ENCODE measurements at regions of chr1 and their contacts with region 1.

Region 1: GRCh38 chr1:229059671-229060539 is 211.0 kb upstream of the RAB4A start:
- DNase-seq: no peak
- H3K4me3 ChIP-seq: no peak overlapping the region
- H3K27ac ChIP-seq: no peak overlapping the region
- H3K4me1 ChIP-seq: no peaks in the 10 kb centered on the region
- H3K27me3 ChIP-seq: peaks cover 77% of the 10 kb centered on the region
- CTCF ChIP-seq: no peak

Region 2: DNA sequence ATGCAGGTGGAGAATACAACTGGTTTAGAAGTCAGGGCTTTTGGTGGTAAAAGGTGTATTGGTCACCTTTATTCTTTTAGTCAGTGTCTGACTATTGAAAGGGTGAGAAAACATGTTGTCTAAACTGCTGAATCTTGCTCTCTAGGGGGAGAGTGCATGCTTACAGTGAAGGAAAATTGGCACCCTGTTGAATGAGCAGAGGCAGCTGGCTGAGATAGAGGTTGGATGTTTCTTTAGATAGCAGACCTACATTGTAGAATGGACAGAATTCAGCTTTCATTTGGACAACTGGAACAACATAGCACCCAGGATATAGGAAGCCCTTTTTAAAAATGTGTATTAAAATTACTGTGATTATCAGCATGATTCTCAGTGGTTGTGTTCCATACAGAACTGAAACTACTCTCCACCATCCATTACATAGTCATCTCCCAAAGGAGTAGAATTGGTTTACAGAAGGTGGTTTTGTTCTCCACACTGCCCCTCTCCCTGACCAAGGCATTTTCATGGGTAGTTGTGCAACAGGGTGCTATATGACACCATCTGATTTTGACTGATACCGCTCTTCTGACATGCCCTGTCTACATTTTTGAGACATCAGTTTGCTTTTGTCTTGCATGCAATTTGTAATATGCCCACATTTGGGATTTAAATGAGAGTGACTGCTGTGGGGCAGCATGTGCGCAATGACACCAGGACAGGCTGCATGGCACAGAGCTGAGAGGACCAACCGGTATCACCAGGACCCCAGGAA is 308.4 kb before region 1 on chr1:
- CTCF ChIA-PET with region 1: no interaction called
- POLR2A ChIA-PET with region 1: no interaction called
- intact Hi-C with region 1: no loop called
- DNase-seq: no peak
- H3K4me3 ChIP-seq: no peak overlapping the region
- H3K27ac ChIP-seq: no peak overlapping the region
- H3K4me1 ChIP-seq: no peaks in the 10 kb centered on the region
- H3K27me3 ChIP-seq: peaks cover 66% of the 10 kb centered on the region
- CTCF ChIP-seq: no peak

Region 3: DNA sequence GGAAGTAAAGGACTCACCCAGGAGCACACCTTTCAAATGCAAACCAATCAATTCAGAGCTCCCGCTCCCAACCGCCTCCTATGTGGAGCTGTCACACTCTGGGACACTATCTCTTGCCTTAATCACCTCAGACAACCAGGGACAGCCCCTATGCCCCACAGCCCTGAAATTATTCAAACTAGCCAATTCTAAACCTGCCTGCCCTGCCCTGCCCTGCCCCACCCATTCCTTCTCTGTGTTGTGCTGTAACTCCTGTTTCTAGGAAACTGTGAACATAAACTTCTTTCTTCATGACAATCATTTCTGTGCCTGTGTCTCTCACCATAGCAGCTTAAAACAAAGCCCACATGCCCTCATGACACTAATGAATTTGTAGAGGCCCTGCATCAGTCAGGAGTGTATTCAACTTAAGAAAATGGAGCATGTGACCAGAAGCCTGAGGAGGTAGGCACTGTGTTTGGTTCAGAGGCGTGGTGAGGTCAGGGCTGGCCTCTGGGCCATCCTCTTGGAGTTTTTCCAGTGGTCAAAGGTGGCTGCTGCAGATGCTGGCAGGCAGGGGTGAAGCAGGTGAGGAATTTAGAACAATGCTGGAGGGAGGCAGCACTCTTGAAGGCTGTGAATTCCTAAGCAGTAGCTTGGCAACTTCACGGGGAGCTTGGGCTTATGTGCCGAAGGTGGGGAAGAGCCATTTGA is 250.1 kb before region 1 on chr1:
- CTCF ChIA-PET with region 1: interaction called, 14 read pairs
- POLR2A ChIA-PET with region 1: no interaction called
- intact Hi-C with region 1: no loop called
- DNase-seq: peak in 1 of 2 experiments; percentile 43
- H3K4me3 ChIP-seq: no peak overlapping the region
- H3K27ac ChIP-seq: no peak overlapping the region
- H3K4me1 ChIP-seq: no peaks in the 10 kb centered on the region
- H3K27me3 ChIP-seq: peaks cover 52% of the 10 kb centered on the region
- CTCF ChIP-seq: no peak

Region 4: GRCh38 chr1:229075217-229075616 is 15.3 kb after region 1 on chr1:
- CTCF ChIA-PET with region 1: no interaction called
- POLR2A ChIA-PET with region 1: no interaction called
- intact Hi-C with region 1: no loop called
- DNase-seq: no peak
- H3K4me3 ChIP-seq: no peak overlapping the region
- H3K27ac ChIP-seq: no peak overlapping the region
- H3K4me1 ChIP-seq: no peaks in the 10 kb centered on the region
- H3K27me3 ChIP-seq: peaks cover 68% of the 10 kb centered on the region
- CTCF ChIP-seq: no peak

Region 5: GRCh38 chr1:229127301-229127700 is 67.4 kb after region 1 on chr1:
- CTCF ChIA-PET with region 1: no interaction called
- POLR2A ChIA-PET with region 1: no interaction called
- intact Hi-C with region 1: no loop called
- DNase-seq: no peak
- H3K4me3 ChIP-seq: no peak overlapping the region
- H3K27ac ChIP-seq: no peak overlapping the region
- H3K4me1 ChIP-seq: no peaks in the 10 kb centered on the region
- H3K27me3 ChIP-seq: peaks cover 80% of the 10 kb centered on the region
- CTCF ChIP-seq: no peak

Measured in PC-9 (cell line).